Activated T-helper 1 cell treated with anti-CD3 and anti-CD28 coated beads, Interleukin-12 subunit alpha, Interleukin-12 subunit beta, Interleukin-2, Interleukin-4 antibody, amounts not matched to agents 30 ng/mL and 10 ng/mL and 1 ng/mL, durations not matched to agents 14 hours and 24 hours and 36 hours (primary cell): ENCODE measurements at regions of chr13 and their contacts with region 1.

Region 1: GRCh38 chr13:28138012-28138755 is at the start of gene PAN3:
- DNase-seq: peak; percentile 89
- H3K4me3 Mint-ChIP-seq: peak within 1 kb of the TSS; percentile 96
- H3K27ac Mint-ChIP-seq: peak within 1 kb of the TSS; percentile 97
- H3K4me1 Mint-ChIP-seq: peaks cover 50% of the 10 kb centered on the region
- H3K27me3 Mint-ChIP-seq: no peaks in the 10 kb centered on the region
- total RNA-seq, gene PAN3: 36.1 and 37.0 TPM in 2 replicates

Region 2: DNA sequence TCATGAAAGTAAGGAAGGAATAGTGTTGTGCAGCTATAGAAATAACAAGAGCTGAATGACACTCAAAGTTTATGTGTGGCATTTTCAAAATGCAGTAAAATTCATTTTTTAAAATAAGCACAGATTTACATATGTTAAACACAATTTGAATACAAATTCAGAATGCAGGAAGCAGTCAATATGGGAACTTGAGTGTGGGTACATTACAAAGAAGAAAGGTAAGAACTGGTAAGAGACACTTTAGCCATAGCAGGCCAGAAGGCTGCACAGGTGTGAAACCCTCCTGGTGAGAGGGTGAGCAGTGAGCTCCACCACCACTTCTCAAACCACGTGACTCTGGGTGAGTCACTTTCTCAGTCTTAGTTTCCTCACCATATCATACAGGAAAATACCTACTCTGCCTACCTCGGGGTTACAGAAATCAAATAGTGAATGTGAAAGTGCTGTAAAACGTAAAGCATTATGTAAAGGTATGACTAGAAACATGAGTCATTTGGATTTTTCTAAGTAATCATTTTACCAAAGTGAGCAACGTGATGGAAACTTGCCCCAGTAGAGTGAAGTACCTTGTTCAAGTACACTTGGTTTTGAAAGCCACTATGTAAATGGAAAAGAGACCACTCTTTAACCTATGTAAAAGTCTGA is 1007.1 kb before region 1 on chr13:
- intact Hi-C with region 1: loop called (anchors 1 kb)
- DNase-seq: peak; percentile 80
- H3K4me3 Mint-ChIP-seq: peak overlapping the region; percentile 60
- H3K27ac Mint-ChIP-seq: peak overlapping the region; percentile 77
- H3K4me1 Mint-ChIP-seq: peaks cover 89% of the 10 kb centered on the region
- H3K27me3 Mint-ChIP-seq: no peaks in the 10 kb centered on the region

Region 3: GRCh38 chr13:27449936-27450828 is 688.0 kb before region 1 on chr13 and contains the start of gene MTIF3:
- intact Hi-C with region 1: loop called (anchors 1 kb)
- DNase-seq: peak; percentile 95
- H3K4me3 Mint-ChIP-seq: peak within 1 kb of the TSS; percentile 91
- H3K27ac Mint-ChIP-seq: peak within 1 kb of the TSS; percentile 93
- H3K4me1 Mint-ChIP-seq: peaks cover 58% of the 10 kb centered on the region
- H3K27me3 Mint-ChIP-seq: no peaks in the 10 kb centered on the region
- total RNA-seq, gene MTIF3: 30.4 and 36.0 TPM in 2 replicates

Region 4: GRCh38 chr13:27481766-27482165 is 656.4 kb before region 1 on chr13:
- intact Hi-C with region 1: no loop called
- DNase-seq: peak; percentile 9
- H3K4me3 Mint-ChIP-seq: no peak overlapping the region
- H3K27ac Mint-ChIP-seq: no peak overlapping the region
- H3K4me1 Mint-ChIP-seq: peaks cover 20% of the 10 kb centered on the region
- H3K27me3 Mint-ChIP-seq: peaks cover 5% of the 10 kb centered on the region

Region 5: GRCh38 chr13:27857282-27857681 is 280.9 kb before region 1 on chr13:
- intact Hi-C with region 1: no loop called
- DNase-seq: no peak
- H3K4me3 Mint-ChIP-seq: no peak overlapping the region
- H3K27ac Mint-ChIP-seq: no peak overlapping the region
- H3K4me1 Mint-ChIP-seq: no peaks in the 10 kb centered on the region
- H3K27me3 Mint-ChIP-seq: peaks cover 5% of the 10 kb centered on the region

Region 6: GRCh38 chr13:28173793-28174192 is 35.6 kb after region 1 on chr13:
- intact Hi-C with region 1: loop called (anchors 5 kb)
- DNase-seq: no peak
- H3K4me3 Mint-ChIP-seq: no peak overlapping the region
- H3K27ac Mint-ChIP-seq: no peak overlapping the region
- H3K4me1 Mint-ChIP-seq: peaks cover 5% of the 10 kb centered on the region
- H3K27me3 Mint-ChIP-seq: no peaks in the 10 kb centered on the region

Region 7: GRCh38 chr13:28531077-28531844 is 393.1 kb after region 1 on chr13:
- intact Hi-C with region 1: loop called (anchors 5 kb)
- DNase-seq: no peak
- H3K4me3 Mint-ChIP-seq: no peak overlapping the region
- H3K27ac Mint-ChIP-seq: no peak overlapping the region
- H3K4me1 Mint-ChIP-seq: no peaks in the 10 kb centered on the region
- H3K27me3 Mint-ChIP-seq: peaks cover 31% of the 10 kb centered on the region

Region 8: GRCh38 chr13:29077051-29077813 is 939.0 kb after region 1 on chr13:
- intact Hi-C with region 1: no loop called
- DNase-seq: no peak
- H3K4me3 Mint-ChIP-seq: no peak overlapping the region
- H3K27ac Mint-ChIP-seq: no peak overlapping the region
- H3K4me1 Mint-ChIP-seq: peaks cover 6% of the 10 kb centered on the region
- H3K27me3 Mint-ChIP-seq: peaks cover 2% of the 10 kb centered on the region

Region 9: DNA sequence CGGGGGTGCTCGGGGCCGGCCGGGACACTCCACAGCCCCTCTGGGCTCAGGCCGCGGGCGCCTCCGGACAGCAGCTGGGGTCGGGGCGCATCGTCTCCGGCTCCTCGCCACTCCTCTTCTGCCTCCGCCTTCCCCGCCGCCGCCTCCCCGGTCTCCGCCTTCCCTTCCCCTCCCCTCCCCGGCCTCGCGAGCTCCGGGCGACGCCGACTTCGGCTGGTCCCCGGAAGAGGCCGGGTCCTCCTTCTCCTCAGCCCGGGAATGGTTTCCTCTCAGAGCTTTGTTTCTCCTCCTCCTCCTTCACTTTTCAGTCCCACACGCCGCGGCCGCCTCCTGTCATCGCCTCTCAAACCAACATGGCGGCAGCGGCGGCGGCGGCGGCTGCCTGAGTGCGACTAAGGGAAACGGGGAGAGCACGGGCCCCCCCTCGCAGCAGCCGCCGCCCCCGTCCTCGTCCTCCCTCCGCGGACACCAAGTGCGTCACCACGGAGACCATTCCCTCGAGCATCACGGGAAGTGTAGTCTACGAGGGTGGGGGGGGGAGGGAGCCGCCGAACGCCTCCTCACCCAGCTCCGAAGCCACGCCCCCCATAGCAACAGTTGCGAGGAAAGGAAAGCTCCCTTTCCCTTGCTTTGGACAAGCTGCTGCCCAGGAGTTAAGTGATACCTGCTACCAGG is 1712.2 kb after region 1 on chr13 and contains the start of gene UBL3:
- intact Hi-C with region 1: loop called (anchors 10 kb)
- DNase-seq: peak; percentile 90
- H3K4me3 Mint-ChIP-seq: peak within 1 kb of the TSS; percentile 97
- H3K27ac Mint-ChIP-seq: peak within 1 kb of the TSS; percentile 98
- H3K4me1 Mint-ChIP-seq: peaks cover 50% of the 10 kb centered on the region
- H3K27me3 Mint-ChIP-seq: no peaks in the 10 kb centered on the region
- total RNA-seq, gene UBL3: 10.9 and 12.8 TPM in 2 replicates